Esophagus squamous epithelium (tissue), 5 donors: ENCODE measurements at regions of chr11 and their contacts with region 1.

Region 1: DNA sequence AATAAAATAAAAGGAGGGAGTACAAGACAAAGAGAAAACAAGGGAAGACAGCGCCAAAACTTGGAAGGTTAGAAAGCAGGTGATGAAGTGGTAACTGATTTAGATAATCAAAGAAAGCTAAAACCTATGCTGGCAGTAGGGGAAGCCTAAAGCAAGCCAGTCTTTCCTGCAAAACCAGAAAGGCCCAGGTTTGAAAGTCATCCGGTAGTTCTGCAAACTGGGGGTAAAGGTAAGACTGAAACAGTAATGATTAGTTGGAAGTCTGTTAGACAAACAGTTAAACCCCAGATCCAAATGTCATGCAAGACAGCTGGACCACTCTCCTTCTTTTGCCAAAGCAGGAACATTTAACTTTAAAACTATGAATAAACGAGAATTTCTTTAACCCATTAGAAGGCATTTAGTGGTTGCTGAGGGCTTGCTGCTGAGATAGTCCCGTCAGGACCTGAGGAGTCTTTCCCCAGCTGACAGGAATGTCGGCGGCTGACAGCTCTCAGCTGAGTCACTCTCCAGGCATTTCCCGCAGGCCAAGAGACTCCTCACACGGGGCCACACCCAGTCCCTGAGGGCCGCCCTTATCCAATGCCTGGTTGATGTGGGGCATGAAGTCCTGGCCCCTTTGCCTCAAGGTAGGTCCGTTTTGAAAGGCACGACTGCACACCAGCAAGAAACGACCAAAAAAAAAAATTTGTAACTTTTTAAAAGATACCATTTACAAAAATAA is 36.3 kb upstream of the CFAP300 start:
- DNase-seq: no peak
- H3K4me3 ChIP-seq: peak overlapping the region in 1 of 4 donors; percentile 4
- H3K27ac ChIP-seq: peak overlapping the region in 2 of 4 donors; percentile 16 to 18
- H3K4me1 ChIP-seq: peaks cover 0 to 28% (median 15%) of the 10 kb centered on the region in 3 donors
- H3K27me3 ChIP-seq: peaks cover 0 to 4% (median 0%) of the 10 kb centered on the region in 4 donors
- CTCF ChIP-seq: no peak
- POLR2A ChIP-seq: no peak

Region 2: GRCh38 chr11:101860696-101861427 is 150.1 kb before region 1 on chr11:
- intact Hi-C with region 1: loop called (anchors 10 kb)
- DNase-seq: no peak
- H3K4me3 ChIP-seq: no peak overlapping the region
- H3K27ac ChIP-seq: no peak overlapping the region
- H3K4me1 ChIP-seq: peaks cover 0 to 4% (median 0%) of the 10 kb centered on the region in 3 donors
- H3K27me3 ChIP-seq: no peaks in the 10 kb centered on the region
- CTCF ChIP-seq: peak; percentile 49 to 72 (median 64)
- POLR2A ChIP-seq: no peak